Dorsolateral prefrontal cortex (tissue), 120 donors: ENCODE measurements at regions of chr2 and their contacts with region 1.

Region 1: DNA sequence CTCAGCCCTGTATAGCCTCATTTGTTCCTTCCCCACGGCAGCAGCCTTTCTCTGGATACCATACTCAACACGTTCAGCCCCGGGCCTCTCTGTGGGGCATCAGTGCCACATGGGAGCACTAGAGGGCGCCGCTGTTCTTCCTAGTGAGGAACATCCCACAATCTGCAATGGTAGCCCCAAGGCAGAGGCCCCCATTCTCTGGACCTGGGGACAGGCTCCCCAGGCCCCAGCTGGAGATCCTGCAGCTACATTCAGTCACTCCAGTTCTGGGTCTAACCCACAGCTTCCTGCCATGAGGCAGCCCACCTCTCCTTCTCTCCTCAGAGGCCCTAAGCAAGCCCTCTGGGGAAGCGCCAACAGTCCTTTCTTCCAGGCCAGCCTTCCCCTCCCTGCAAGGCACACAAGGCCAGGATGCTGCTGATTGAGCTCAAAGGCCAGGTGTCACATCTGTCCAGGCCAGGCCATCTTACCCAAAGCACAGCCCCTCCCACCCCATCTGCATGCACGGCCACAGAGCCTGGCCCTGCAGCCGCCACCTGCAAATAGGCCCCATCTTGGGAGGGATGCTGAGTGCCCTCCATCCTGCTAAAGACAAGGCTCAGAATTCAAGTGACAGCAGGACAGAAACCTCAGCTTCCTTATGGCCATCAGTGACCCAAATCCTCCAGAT is 14.3 kb upstream of the SFXN5 start:
- DNase-seq: peak; percentile 82 to 94 (median 86)
- H3K4me3 ChIP-seq: no peak overlapping the region
- H3K27ac ChIP-seq: peak overlapping the region in 1 of 59 donors; percentile 43
- H3K27me3 ChIP-seq: no peaks in the 10 kb centered on the region
- CTCF ChIP-seq: peak in 55 of 56 donors; percentile 47 to 97 (median 90)

Region 2: DNA sequence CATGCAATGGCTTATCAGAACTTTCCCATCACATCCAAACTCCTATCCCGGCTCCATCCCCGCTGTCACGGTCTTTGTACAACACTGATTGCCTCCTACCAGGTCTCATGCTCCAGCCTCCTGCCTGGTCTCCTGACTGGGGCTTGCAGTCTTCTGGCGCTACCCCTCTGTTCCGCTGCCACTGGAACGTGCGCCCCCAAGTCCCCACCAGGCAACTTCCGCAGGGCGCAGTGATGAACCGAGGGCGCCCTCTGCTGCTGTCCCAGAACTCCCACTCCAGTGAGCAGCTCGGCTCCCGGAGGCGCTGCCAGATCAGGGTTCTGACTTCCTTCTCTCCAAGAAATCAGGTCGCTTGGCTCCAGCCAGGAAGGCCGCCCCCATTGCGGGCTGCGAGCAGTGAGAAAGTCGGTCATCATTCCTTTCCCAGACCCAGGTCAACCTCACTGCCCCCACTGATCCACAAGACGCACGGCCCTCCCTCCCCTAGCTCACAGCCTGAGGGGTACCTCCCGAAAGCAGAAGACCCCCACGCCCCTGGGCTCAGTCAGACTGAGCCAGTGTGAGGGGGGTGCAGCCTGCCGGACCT is 70.8 kb after region 1 on chr2:
- intact Hi-C with region 1: loop called (anchors 1 to 5 kb)
- DNase-seq: peak; percentile 54 to 86 (median 66)
- H3K4me3 ChIP-seq: peak overlapping the region in 30 of 59 donors; percentile 0 to 45 (median 24)
- H3K27ac ChIP-seq: no peak overlapping the region
- H3K27me3 ChIP-seq: peaks cover 0 to 14% (median 0%) of the 10 kb centered on the region in 45 donors
- CTCF ChIP-seq: peak; percentile 18 to 91 (median 76)

Region 3: DNA sequence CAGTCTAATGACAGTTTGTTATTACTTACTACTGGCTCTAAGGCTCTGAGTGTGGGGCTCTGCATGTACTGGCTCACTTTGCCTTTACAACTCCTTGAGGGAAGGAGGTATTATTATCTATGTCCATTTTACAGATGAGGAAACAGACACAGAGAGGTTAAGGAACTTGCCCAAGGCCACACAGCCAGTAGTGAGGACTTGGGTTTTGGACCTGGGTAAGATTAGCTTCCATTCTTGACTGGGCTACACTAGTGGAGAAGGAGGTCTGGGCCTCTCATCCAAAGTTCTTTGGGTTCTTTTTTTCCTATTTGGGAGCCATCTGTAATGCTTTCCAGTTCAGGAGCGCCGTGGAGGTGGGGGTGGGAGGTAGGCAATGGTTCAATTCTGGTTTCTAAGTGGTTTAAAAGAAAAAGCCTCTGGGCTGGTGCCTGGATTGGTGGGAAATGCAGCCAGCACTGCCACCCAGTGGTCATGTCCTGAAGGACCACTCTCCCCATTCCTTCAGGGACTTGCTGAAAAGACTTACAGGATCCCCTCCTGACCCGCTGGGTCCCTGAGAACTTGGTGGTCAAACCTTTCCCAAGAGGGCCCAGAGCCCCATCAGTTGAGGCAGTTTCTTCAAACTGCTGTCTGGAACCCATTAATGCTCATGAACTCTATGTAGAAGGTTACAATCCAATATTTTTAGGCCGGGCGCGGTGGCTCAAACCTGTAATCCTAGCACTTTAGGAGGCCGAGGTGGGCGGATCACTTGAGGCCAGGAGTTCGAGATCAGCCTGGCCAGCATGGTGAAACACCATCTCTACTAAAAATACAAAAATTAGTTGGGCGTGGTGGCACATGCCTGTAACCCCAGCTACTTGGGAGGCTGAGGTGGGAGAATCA is 77.9 kb after region 1 on chr2:
- intact Hi-C with region 1: loop called (anchors 1 to 5 kb)
- DNase-seq: peak; percentile 59 to 83 (median 74)
- H3K4me3 ChIP-seq: no peak overlapping the region
- H3K27ac ChIP-seq: no peak overlapping the region
- H3K27me3 ChIP-seq: no peaks in the 10 kb centered on the region
- CTCF ChIP-seq: peak; percentile 76 to 95 (median 89)

Region 4: DNA sequence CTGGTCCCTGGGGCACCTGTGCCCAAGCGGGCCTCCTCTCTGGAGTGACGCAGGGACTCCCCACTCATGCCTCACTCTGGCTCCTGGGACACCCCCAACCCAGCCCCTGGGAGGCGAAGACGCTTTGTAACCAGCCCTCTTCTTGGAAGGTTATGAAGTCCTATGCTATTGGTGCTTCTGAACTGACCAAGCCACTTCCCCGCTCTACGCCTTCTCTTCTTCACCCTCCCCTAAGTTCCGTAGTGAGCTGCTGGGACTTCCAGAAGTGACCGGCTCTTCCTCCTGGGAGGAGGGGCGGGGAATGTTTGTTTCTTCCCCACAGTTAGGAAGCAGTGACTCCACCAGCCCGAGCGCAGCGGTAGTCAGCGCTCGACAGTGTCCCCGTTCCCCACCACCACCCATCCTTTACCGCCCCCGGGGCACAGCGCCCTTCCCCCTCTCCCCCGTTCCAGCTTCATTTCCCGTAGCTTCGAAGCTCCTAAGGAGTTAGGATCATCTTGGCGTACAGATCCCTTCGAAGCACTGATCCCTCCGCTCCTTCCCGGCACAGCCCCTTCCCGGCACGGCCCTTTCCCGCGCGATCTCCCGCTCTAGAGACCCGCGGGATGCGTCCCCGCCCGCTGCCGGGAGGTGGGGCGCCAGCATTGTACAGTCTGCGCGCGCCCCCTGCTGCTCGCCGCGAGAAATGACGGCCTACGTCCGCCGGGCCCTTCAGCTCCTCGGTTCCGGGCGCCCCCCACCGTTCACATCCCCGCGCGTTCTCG is 91.2 kb after region 1 on chr2:
- intact Hi-C with region 1: loop called in 1 of 2 experiments (anchors 1 kb)
- DNase-seq: peak; percentile 82 to 92 (median 90)
- H3K4me3 ChIP-seq: peak overlapping the region; percentile 33 to 75 (median 64)
- H3K27ac ChIP-seq: peak overlapping the region in 23 of 59 donors; percentile 6 to 76 (median 52)
- H3K27me3 ChIP-seq: peaks cover 0 to 42% (median 0%) of the 10 kb centered on the region in 45 donors
- CTCF ChIP-seq: peak; percentile 85 to 100 (median 99)